ENCODE measurements at regions of chr6 and their contacts with region 1.

Region 1: DNA sequence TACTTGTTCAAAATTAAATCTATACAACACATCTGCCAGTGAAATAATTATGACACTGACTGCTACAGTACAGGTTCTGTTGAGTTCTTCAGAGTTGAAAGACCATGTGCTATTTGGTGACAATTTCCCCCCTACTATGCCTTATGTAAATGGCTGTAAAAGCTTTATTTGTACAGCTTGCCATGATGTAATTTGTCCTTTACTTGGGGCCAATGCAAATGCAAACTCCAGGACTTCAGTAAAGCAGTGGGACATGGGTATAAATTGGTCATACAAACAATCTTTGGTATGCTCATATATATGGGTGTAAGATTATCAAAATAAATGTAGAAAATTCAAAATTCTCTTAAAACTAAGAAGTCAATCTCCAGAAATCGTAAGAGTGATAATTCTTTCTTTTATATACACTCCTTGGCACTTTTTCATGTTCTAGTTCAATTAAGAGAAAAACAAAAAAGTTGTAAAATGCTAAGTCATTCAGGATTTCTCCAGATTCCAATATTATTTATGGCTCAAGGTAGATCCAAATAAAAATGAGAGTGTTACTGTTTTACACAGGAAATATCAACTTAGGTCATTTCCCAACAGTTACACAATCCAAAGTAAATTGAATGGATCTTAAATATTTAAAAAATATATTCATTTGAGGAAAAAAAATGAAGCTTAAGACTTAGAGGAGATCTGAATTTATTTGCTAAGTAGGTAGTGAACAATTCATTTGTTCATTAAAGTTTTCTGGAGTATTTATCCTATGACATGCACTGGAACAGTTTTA is 1310.5 kb upstream of the CITED2 start:
- DNase-seq: no peak
- ATAC-seq: no peak
- H3K4me3 ChIP-seq: no peak overlapping the region
- H3K4me3 Mint-ChIP-seq: no peak overlapping the region
- H3K27ac ChIP-seq: no peak overlapping the region
- H3K27ac Mint-ChIP-seq: no peak overlapping the region
- H3K4me1 ChIP-seq: no peaks in the 10 kb centered on the region
- H3K4me1 Mint-ChIP-seq: no peaks in the 10 kb centered on the region
- H3K27me3 ChIP-seq: no peaks in the 10 kb centered on the region
- H3K27me3 Mint-ChIP-seq: no peaks in the 10 kb centered on the region

Region 2: DNA sequence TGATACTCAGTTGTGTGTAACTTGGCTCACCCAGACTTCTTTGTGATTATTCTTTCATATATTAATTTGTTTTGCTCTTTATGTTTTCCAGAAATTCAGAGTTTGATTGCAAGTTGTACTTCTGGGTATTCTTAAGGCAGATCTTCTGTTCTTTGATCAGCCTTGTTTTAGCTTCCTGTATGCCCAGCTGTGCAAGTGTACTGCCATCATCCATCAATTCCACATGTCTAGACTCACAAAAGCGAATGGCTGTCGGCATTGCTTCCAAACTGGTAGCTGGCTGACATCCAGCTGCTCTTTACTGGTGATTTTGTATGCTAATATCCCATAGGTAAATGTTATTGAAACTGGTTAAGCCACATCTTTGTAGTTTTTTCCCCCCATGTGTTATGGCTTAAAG is 225.8 kb before region 1 on chr6:
- CTCF ChIA-PET with region 1: no interaction called
- POLR2A ChIA-PET with region 1: no interaction called
- intact Hi-C with region 1: no loop called
- DNase-seq: no peak
- ATAC-seq: no peak
- H3K4me3 ChIP-seq: no peak overlapping the region
- H3K4me3 Mint-ChIP-seq: no peak overlapping the region
- H3K27ac ChIP-seq: no peak overlapping the region
- H3K27ac Mint-ChIP-seq: no peak overlapping the region
- H3K4me1 ChIP-seq: no peaks in the 10 kb centered on the region
- H3K4me1 Mint-ChIP-seq: no peaks in the 10 kb centered on the region
- H3K27me3 ChIP-seq: no peaks in the 10 kb centered on the region
- H3K27me3 Mint-ChIP-seq: peaks cover 2 to 24% (median 21%) of the 10 kb centered on the region in 5 donors

Region 3: GRCh38 chr6:140620496-140620895 is 64.5 kb before region 1 on chr6:
- CTCF ChIA-PET with region 1: no interaction called
- POLR2A ChIA-PET with region 1: no interaction called
- intact Hi-C with region 1: no loop called
- DNase-seq: no peak
- ATAC-seq: no peak
- H3K4me3 ChIP-seq: no peak overlapping the region
- H3K4me3 Mint-ChIP-seq: no peak overlapping the region
- H3K27ac ChIP-seq: no peak overlapping the region
- H3K27ac Mint-ChIP-seq: no peak overlapping the region
- H3K4me1 ChIP-seq: no peaks in the 10 kb centered on the region
- H3K4me1 Mint-ChIP-seq: no peaks in the 10 kb centered on the region
- H3K27me3 ChIP-seq: no peaks in the 10 kb centered on the region
- H3K27me3 Mint-ChIP-seq: peaks cover 2 to 36% (median 10%) of the 10 kb centered on the region in 5 donors

Region 4: DNA sequence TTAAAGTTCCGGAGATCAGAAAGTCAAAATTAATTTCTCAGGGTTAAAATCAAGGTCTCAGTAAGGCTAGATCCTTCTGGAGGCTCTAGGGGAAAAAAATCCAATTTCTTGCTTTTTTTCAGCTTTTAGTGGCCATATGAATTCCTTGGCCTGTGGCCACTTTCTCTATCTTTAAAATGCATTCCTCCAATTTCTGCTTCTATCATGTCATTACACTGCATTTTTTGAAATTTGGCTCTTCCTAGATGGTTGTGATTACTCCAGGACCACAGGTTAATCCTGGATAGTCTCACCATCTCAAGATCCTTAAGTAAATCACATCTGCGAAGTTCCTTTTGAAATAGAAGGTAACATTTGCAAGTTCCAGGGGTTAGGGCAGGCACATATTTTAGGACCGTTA is 15.6 kb before region 1 on chr6:
- CTCF ChIA-PET with region 1: no interaction called
- POLR2A ChIA-PET with region 1: no interaction called
- intact Hi-C with region 1: loop called in 1 of 2 experiments (anchors 1 kb)
- DNase-seq: no peak
- ATAC-seq: no peak
- H3K4me3 ChIP-seq: no peak overlapping the region
- H3K4me3 Mint-ChIP-seq: no peak overlapping the region
- H3K27ac ChIP-seq: no peak overlapping the region
- H3K27ac Mint-ChIP-seq: no peak overlapping the region
- H3K4me1 ChIP-seq: no peaks in the 10 kb centered on the region
- H3K4me1 Mint-ChIP-seq: peaks cover 0 to 3% (median 0%) of the 10 kb centered on the region in 7 donors
- H3K27me3 ChIP-seq: no peaks in the 10 kb centered on the region
- H3K27me3 Mint-ChIP-seq: peaks cover 0 to 12% (median under 1%) of the 10 kb centered on the region in 5 donors

Region 5: GRCh38 chr6:140711019-140711613 is 26.2 kb after region 1 on chr6:
- CTCF ChIA-PET with region 1: no interaction called
- POLR2A ChIA-PET with region 1: no interaction called
- intact Hi-C with region 1: no loop called
- DNase-seq: no peak
- ATAC-seq: no peak
- H3K4me3 ChIP-seq: no peak overlapping the region
- H3K4me3 Mint-ChIP-seq: no peak overlapping the region
- H3K27ac ChIP-seq: no peak overlapping the region
- H3K27ac Mint-ChIP-seq: no peak overlapping the region
- H3K4me1 ChIP-seq: no peaks in the 10 kb centered on the region
- H3K4me1 Mint-ChIP-seq: peaks cover 0 to 2% (median 0%) of the 10 kb centered on the region in 7 donors
- H3K27me3 ChIP-seq: no peaks in the 10 kb centered on the region
- H3K27me3 Mint-ChIP-seq: peaks cover 0 to 5% (median 0%) of the 10 kb centered on the region in 5 donors

Measured in naive thymus-derived CD4-positive, alpha-beta T cell (primary cell).